Activated CD4-positive, alpha-beta memory T cell treated with anti-CD3 and anti-CD28 coated beads for 36 hours (primary cell): ENCODE measurements at regions of chr1 and their contacts with region 1.

Region 1: GRCh38 chr1:221858818-221859611 is 117.1 kb upstream of the DUSP10 start:
- DNase-seq: peak; percentile 25
- H3K4me3 Mint-ChIP-seq: no peak overlapping the region
- H3K27ac Mint-ChIP-seq: no peak overlapping the region
- H3K4me1 Mint-ChIP-seq: peaks cover 14% of the 10 kb centered on the region
- H3K27me3 Mint-ChIP-seq: no peaks in the 10 kb centered on the region

Region 2: GRCh38 chr1:221478050-221478949 is 380.7 kb before region 1 on chr1:
- CTCF ChIA-PET with region 1: no interaction called
- POLR2A ChIA-PET with region 1: no interaction called
- intact Hi-C with region 1: loop called (anchors 2 kb)
- DNase-seq: peak; percentile 70
- H3K4me3 Mint-ChIP-seq: no peak overlapping the region
- H3K27ac Mint-ChIP-seq: no peak overlapping the region
- H3K4me1 Mint-ChIP-seq: peaks cover 3% of the 10 kb centered on the region
- H3K27me3 Mint-ChIP-seq: peaks cover 6% of the 10 kb centered on the region

Region 3: GRCh38 chr1:221548942-221549341 is 310.1 kb before region 1 on chr1:
- CTCF ChIA-PET with region 1: no interaction called
- POLR2A ChIA-PET with region 1: no interaction called
- intact Hi-C with region 1: loop called (anchors 5 kb)
- DNase-seq: no peak
- H3K4me3 Mint-ChIP-seq: no peak overlapping the region
- H3K27ac Mint-ChIP-seq: no peak overlapping the region
- H3K4me1 Mint-ChIP-seq: no peaks in the 10 kb centered on the region
- H3K27me3 Mint-ChIP-seq: no peaks in the 10 kb centered on the region

Region 4: DNA sequence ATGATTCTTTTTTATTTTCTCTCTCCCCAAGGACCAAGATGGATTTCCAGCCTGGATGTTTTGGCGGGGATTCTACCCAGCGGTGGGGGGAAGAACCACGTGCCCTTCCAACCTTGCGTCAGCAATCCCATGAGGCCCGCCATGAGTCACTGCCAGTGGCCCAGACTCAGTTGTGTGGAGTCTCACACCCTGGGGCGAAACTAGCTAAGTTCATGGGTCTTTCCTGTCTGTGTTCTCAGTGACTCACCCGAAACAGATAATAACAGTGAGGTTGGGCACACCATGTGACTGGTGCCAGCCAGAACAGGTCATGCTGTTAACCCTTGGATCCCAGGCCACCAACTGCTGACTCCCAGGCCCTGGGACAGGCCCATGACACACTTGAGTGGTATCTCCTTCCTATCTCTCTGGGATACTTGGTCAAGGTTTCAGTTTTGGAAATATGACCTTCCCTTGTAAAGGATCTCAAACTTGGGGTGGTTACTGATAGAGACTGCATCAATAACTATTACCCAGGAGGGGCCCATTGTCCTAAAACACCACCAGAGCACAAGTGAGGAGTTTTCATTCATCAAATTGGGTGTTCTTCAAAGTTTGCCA is 19.1 kb before region 1 on chr1:
- CTCF ChIA-PET with region 1: interaction called, 3 read pairs
- POLR2A ChIA-PET with region 1: no interaction called
- intact Hi-C with region 1: loop called (anchors 1 kb)
- DNase-seq: peak; percentile 88
- H3K4me3 Mint-ChIP-seq: no peak overlapping the region
- H3K27ac Mint-ChIP-seq: peak overlapping the region; percentile 74
- H3K4me1 Mint-ChIP-seq: peaks cover 38% of the 10 kb centered on the region
- H3K27me3 Mint-ChIP-seq: peaks cover 6% of the 10 kb centered on the region